B cell (primary cell): ENCODE measurements at regions of chr10 and their contacts with region 1.

Region 1: GRCh38 chr10:76397181-76397881 is 965.9 kb downstream of the LRMDA start:
- DNase-seq: no peak
- ATAC-seq: no peak
- H3K4me3 ChIP-seq: no peak overlapping the region
- H3K4me3 Mint-ChIP-seq: no peak overlapping the region
- H3K27ac ChIP-seq: no peak overlapping the region
- H3K27ac Mint-ChIP-seq: no peak overlapping the region
- H3K4me1 ChIP-seq: no peaks in the 10 kb centered on the region
- H3K4me1 Mint-ChIP-seq: no peaks in the 10 kb centered on the region
- H3K27me3 ChIP-seq: no peaks in the 10 kb centered on the region
- H3K27me3 Mint-ChIP-seq: no peaks in the 10 kb centered on the region
- CTCF ChIP-seq: no peak

Region 2: DNA sequence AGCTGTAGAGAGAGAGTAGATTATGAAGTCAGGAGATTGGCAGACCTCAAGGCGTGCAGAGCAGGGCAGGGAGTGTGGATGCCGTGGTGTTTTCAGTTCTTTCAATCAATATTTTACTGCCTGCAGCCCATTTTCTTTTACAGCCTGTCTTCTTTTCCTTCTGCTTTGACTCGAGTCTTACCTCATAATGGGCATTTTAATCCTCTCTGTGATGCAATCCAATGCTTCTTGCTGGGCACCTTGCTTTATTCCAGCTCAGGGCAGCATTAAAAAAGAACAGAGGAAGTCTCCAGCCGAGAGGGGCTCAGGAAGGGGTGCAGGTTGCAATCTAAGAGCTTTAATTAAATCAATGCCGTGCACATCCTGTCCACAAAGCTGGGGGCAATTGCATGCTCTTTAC is 126.9 kb before region 1 on chr10:
- CTCF ChIA-PET with region 1: no interaction called
- POLR2A ChIA-PET with region 1: no interaction called
- intact Hi-C with region 1: no loop called
- DNase-seq: no peak
- ATAC-seq: no peak
- H3K4me3 ChIP-seq: no peak overlapping the region
- H3K4me3 Mint-ChIP-seq: no peak overlapping the region
- H3K27ac ChIP-seq: no peak overlapping the region
- H3K27ac Mint-ChIP-seq: no peak overlapping the region
- H3K4me1 ChIP-seq: no peaks in the 10 kb centered on the region
- H3K4me1 Mint-ChIP-seq: no peaks in the 10 kb centered on the region
- H3K27me3 ChIP-seq: no peaks in the 10 kb centered on the region
- H3K27me3 Mint-ChIP-seq: no peaks in the 10 kb centered on the region
- CTCF ChIP-seq: no peak

Region 3: DNA sequence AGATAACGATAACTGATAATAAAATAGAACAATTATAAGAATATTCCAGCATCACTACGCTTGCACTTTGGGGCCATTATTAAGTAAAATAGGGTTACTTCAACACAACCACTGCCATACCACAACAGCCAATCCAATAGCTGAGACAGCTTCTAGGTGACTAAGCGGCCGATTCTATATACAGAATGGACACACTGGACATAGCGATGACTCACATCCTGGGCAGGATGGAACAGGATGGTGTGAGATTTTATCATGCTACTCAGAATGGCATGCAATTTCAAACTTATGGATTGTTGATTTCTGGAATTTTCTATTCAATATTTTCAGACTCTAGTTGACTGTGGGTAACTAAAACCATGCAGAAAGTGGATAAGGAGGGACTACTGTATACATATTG is 45.0 kb before region 1 on chr10:
- CTCF ChIA-PET with region 1: no interaction called
- POLR2A ChIA-PET with region 1: no interaction called
- intact Hi-C with region 1: no loop called
- DNase-seq: no peak
- ATAC-seq: no peak
- H3K4me3 ChIP-seq: no peak overlapping the region
- H3K4me3 Mint-ChIP-seq: no peak overlapping the region
- H3K27ac ChIP-seq: no peak overlapping the region
- H3K27ac Mint-ChIP-seq: no peak overlapping the region
- H3K4me1 ChIP-seq: no peaks in the 10 kb centered on the region
- H3K4me1 Mint-ChIP-seq: no peaks in the 10 kb centered on the region
- H3K27me3 ChIP-seq: no peaks in the 10 kb centered on the region
- H3K27me3 Mint-ChIP-seq: no peaks in the 10 kb centered on the region
- CTCF ChIP-seq: no peak

Region 4: GRCh38 chr10:76444034-76444800 is 46.9 kb after region 1 on chr10:
- CTCF ChIA-PET with region 1: no interaction called
- POLR2A ChIA-PET with region 1: no interaction called
- intact Hi-C with region 1: loop called (anchors 10 kb)
- DNase-seq: no peak
- ATAC-seq: no peak
- H3K4me3 ChIP-seq: no peak overlapping the region
- H3K4me3 Mint-ChIP-seq: no peak overlapping the region
- H3K27ac ChIP-seq: no peak overlapping the region
- H3K27ac Mint-ChIP-seq: no peak overlapping the region
- H3K4me1 ChIP-seq: no peaks in the 10 kb centered on the region
- H3K4me1 Mint-ChIP-seq: no peaks in the 10 kb centered on the region
- H3K27me3 ChIP-seq: no peaks in the 10 kb centered on the region
- H3K27me3 Mint-ChIP-seq: no peaks in the 10 kb centered on the region
- CTCF ChIP-seq: no peak